GM10248 (cell line): ENCODE measurements at regions of chr16 and their contacts with region 1.

Region 1: DNA sequence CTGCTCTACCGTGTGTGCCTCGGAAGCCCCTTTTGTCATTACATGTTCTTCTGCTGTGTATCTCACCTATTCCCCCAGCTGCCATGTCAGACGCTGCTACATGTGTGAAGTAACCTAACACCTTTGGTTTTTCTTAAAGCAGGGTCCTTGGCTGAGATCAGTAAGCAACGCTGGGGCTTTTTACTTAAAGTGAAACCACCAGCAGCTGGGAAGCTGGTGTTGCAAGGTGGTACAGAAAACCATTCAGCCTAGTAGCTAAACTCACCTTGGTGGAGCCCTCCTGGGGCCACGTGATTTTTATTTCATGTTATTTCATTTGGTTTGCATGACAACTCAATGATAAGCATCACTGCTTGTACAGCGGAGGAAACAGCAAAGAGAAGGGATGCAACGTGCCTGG is 62.6 kb downstream of the PLCG2 start:
- DNase-seq: peak; percentile 51
- CTCF ChIP-seq: no peak

Region 2: GRCh38 chr16:81855552-81856153 is 13.9 kb after region 1 on chr16:
- CTCF ChIA-PET with region 1: interaction called, 15 read pairs
- POLR2A ChIA-PET with region 1: no interaction called
- DNase-seq: no peak
- CTCF ChIP-seq: no peak

Region 3: DNA sequence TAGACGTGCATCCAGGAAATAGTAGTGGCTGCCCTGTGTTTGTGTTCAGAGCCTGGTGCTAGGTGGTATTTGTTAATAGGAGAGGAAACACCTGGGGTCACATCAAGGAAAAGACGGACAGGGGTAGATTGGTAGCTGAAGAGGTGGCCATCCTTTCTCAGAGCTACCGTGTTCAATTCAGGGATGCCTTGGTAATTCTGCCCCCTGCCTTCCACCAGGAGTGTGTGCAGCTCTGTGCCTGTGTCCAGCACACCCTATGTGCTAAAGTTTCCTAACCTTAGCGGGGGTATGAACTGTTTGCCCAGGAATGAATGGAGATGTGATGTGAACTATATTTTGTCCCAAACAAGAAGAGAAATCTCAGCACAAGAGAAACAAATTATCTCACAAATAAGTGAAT is 502.4 kb after region 1 on chr16:
- CTCF ChIA-PET with region 1: no interaction called
- POLR2A ChIA-PET with region 1: no interaction called
- DNase-seq: no peak
- CTCF ChIP-seq: peak; percentile 16